IMR-90 (cell line): ENCODE measurements at regions of chrX and their contacts with region 1.

Region 1: DNA sequence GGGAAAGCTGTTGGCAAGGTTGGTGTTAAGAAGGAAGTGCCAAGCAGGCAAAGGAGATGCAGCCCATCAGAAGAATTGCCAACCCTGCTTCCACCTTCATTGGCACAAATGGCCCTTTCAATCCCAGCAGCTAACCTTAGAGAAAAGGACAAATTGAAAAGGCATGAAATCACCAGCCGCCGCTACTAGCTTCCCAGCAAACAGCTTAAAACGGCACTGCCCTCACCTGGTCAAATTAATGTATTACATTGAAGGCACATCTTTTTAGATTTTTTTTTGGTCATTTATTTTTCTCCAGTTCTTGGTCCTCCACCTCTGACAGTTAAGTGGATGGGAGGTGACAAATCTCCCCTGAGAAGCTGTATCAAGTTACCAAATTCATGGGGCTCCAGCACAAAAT is 51.0 kb upstream of the NHSL2 start:
- DNase-seq: peak; percentile 33
- ATAC-seq: peak; percentile 72; the same call in 1 of the 2 replicates
- H3K4me3 ChIP-seq: no peak overlapping the region
- H3K27ac ChIP-seq: no peak overlapping the region
- H3K4me1 ChIP-seq: no peaks in the 10 kb centered on the region
- H3K27me3 ChIP-seq: peaks cover 21% of the 10 kb centered on the region
- CTCF ChIP-seq: peak; percentile 62
- POLR2A ChIP-seq: no peak
- RAD21 ChIP-seq: peak; percentile 54

Region 2: DNA sequence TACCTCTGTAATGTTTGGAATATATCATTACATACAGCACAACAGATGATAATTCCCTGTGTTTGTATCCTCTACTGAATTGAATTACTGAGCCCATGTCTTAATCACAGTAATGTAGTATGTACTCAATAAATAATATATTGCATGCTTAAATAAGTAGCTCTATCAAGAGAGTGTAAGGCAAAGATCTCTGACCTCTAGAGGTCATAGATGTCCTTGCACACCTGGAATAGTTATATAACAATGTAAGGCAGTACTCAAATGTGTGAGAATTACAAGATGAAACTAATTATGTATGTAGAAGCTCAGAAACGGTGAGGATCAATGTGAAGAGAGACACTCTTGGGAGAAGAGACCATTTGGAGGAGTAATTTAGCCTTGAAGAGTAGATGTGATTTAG is 295.7 kb before region 1 on chrX:
- CTCF ChIA-PET with region 1: no interaction called
- POLR2A ChIA-PET with region 1: no interaction called
- dilution Hi-C with region 1: no loop called
- in situ Hi-C with region 1: no loop called
- intact Hi-C with region 1: no loop called
- DNase-seq: no peak
- ATAC-seq: no peak
- H3K4me3 ChIP-seq: no peak overlapping the region
- H3K27ac ChIP-seq: no peak overlapping the region
- H3K4me1 ChIP-seq: no peaks in the 10 kb centered on the region
- H3K27me3 ChIP-seq: peaks cover 2% of the 10 kb centered on the region; the same call in 1 of the 2 replicates
- CTCF ChIP-seq: no peak
- POLR2A ChIP-seq: no peak
- RAD21 ChIP-seq: no peak

Region 3: DNA sequence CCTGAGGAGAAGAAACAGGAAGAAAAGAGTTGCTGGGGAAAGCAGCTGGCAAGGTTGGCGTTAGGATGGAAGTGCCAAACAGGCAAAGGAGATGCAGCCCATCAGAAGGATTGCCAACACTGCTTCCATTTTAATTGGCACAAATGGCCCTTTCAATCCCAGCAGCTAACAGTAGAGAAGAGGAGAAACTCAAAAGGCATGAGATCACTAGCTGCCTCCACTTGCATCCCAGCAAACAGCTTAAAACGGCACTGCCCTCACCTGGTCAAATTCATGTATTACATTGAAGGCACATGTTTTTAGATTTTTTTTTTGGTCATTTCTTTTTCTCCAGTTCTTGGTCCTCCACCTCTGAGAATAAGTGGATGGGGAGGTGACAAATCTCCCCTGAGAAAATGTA is 207.2 kb before region 1 on chrX:
- CTCF ChIA-PET with region 1: no interaction called
- POLR2A ChIA-PET with region 1: no interaction called
- dilution Hi-C with region 1: no loop called
- in situ Hi-C with region 1: loop called (anchors 25 kb)
- intact Hi-C with region 1: no loop called
- DNase-seq: peak; percentile 59
- ATAC-seq: peak; percentile 91
- H3K4me3 ChIP-seq: no peak overlapping the region
- H3K27ac ChIP-seq: no peak overlapping the region
- H3K4me1 ChIP-seq: no peaks in the 10 kb centered on the region
- H3K27me3 ChIP-seq: peaks cover 5% of the 10 kb centered on the region
- CTCF ChIP-seq: peak; percentile 65
- POLR2A ChIP-seq: no peak
- RAD21 ChIP-seq: peak; percentile 69

Region 4: DNA sequence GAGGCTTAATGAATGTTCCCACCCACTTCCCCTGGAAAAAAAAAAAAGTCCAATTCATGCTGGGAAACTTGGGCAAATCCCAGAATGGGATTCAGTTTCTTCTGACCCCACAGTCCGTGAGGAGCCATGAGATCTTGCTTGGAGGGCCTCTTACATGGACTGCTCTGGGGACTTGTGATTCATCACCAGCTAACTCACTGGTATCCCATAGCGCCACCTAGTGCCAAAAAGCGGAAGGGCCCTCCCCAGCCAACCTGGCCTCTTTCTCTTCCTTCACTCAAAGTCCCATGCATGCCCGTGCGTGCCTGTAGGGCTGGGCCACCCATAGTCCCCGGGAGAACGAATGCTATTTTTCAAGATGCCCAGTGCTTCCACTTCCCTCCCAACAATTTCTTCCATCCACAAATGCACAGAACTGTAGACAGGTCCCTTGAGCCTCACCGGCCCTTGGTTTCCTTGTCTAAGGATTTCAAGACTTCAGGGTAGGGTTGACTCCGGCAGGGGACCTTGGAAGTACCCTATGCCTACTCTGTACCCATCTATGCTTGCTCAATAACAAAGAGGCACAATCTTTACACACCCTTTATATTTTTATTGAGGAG is 267.0 kb after region 1 on chrX:
- CTCF ChIA-PET with region 1: no interaction called
- POLR2A ChIA-PET with region 1: no interaction called
- dilution Hi-C with region 1: no loop called
- in situ Hi-C with region 1: no loop called
- intact Hi-C with region 1: loop called (anchors 1 kb)
- DNase-seq: peak; percentile 80
- ATAC-seq: peak; percentile 89
- H3K4me3 ChIP-seq: no peak overlapping the region
- H3K27ac ChIP-seq: no peak overlapping the region
- H3K4me1 ChIP-seq: peaks cover 2% of the 10 kb centered on the region; the same call in 1 of the 2 replicates
- H3K27me3 ChIP-seq: peaks cover 50% of the 10 kb centered on the region
- CTCF ChIP-seq: peak; percentile 94
- POLR2A ChIP-seq: no peak
- RAD21 ChIP-seq: peak; percentile 85